ENCODE measurements at regions of chr17 and their contacts with region 1.

Region 1: GRCh38 chr17:48997083-48997826 is at the start of gene IGF2BP1:
- DNase-seq: peak; percentile 88 to 95
- ATAC-seq: peak; percentile 49 to 58
- H3K4me3 ChIP-seq: peak within 1 kb of the TSS; percentile 60
- H3K27ac ChIP-seq: peak within 1 kb of the TSS; percentile 93 to 97
- H3K4me1 ChIP-seq: peaks cover 40% of the 10 kb centered on the region
- CTCF ChIP-seq: no peak
- EP300 ChIP-seq: no peak
- POLR2A ChIP-seq: peak; percentile 4; the same call in 1 of the 2 replicates
- RAD21 ChIP-seq: peak in 1 of 2 experiments; percentile 14; a peak in 1 of 5 replicates
- polyA plus RNA-seq, gene IGF2BP1: 26.2 and 30.1 TPM in 2 replicates

Region 2: GRCh38 chr17:48841395-48841831 is 155.8 kb before region 1 on chr17:
- CTCF ChIA-PET with region 1: no interaction called
- POLR2A ChIA-PET with region 1: no interaction called
- DNase-seq: no peak
- ATAC-seq: no peak; a peak in 1 of 6 replicates
- H3K4me3 ChIP-seq: peak overlapping the region; percentile 8; the same call in 1 of the 3 replicates
- H3K27ac ChIP-seq: peak overlapping the region; percentile 33 to 55; a peak in 3 of 6 replicates
- H3K4me1 ChIP-seq: peaks cover 24% of the 10 kb centered on the region; the same call in 2 of the 3 replicates
- CTCF ChIP-seq: no peak
- EP300 ChIP-seq: no peak
- POLR2A ChIP-seq: no peak
- RAD21 ChIP-seq: no peak

Region 3: GRCh38 chr17:48892940-48893645 is 104.2 kb before region 1 on chr17:
- CTCF ChIA-PET with region 1: interaction called, 4 read pairs
- POLR2A ChIA-PET with region 1: interaction called, 23 read pairs
- DNase-seq: no peak
- ATAC-seq: no peak
- H3K4me3 ChIP-seq: peak overlapping the region; percentile 86
- H3K27ac ChIP-seq: peak overlapping the region; percentile 89 to 92
- H3K4me1 ChIP-seq: peaks cover 26% of the 10 kb centered on the region
- CTCF ChIP-seq: no peak
- EP300 ChIP-seq: no peak
- POLR2A ChIP-seq: no peak
- RAD21 ChIP-seq: no peak

Region 4: DNA sequence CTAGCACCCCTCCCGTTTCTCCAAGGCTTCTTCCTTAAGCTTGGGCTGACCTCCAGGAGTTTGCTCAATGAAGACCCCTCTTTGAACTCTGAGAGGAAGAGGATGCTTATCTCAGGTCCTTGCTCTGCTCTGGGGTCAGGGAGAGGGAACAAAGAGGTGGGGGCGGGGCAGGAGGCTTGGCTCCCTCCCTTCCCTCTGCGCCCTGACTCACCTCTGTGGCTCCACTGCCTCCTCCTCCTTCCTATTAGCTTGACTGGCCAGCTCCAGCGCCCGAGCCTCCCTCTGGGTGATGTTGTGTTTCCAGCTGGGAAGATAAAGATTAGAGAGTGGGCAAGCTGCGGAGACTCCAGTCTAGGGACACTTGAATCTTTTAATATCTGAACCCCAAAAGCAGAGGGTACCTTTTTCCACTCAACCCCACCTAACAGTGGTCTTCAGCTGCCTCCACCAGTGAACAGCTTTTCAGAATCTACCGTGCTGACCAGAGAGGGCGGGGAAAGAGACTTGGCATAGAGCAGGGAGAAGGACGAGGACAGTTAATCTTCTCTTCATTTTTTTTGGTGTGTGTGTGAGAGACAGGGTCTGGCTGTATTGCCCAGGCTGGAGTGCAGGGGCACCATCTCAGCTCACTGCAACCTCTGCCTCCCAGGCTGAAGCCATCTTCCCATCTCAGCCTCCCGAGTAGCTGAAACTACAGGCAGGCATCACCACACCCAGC is 35.6 kb before region 1 on chr17:
- CTCF ChIA-PET with region 1: interaction called, 54 read pairs
- POLR2A ChIA-PET with region 1: interaction called, 156 read pairs
- DNase-seq: peak; percentile 83 to 86
- ATAC-seq: peak; percentile 91 to 94
- H3K4me3 ChIP-seq: peak overlapping the region; percentile 30
- H3K27ac ChIP-seq: peak overlapping the region; percentile 94 to 97
- H3K4me1 ChIP-seq: peaks cover 53% of the 10 kb centered on the region
- CTCF ChIP-seq: no peak
- EP300 ChIP-seq: no peak
- POLR2A ChIP-seq: no peak; the same call in none of the 2 replicates
- RAD21 ChIP-seq: peak in 1 of 2 experiments; percentile 15; a peak in 2 of 5 replicates

Region 5: DNA sequence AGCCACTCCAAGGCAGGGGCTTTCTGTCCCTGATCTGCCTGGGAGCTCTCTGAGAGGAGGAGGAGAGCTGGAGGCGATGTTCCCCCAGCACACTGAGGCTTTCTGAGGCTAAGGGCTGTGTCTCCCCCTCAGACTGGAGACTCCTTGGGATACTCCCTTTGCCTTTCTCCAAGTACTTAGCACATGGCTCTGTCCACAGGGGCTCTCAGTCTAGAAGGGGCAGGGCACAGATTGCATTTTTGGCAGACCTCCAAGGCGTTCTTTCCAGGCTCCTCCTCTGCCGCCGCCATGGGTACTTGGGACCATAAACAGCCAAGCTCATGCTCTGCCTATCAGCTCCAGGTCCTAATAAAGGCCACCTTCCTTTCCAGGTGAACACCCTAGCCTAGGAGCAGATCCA is 27.0 kb before region 1 on chr17:
- CTCF ChIA-PET with region 1: interaction called, 48 read pairs
- POLR2A ChIA-PET with region 1: interaction called, 145 read pairs
- DNase-seq: peak in 1 of 2 experiments; percentile 61
- ATAC-seq: peak; percentile 2; a peak in 2 of 6 replicates
- H3K4me3 ChIP-seq: no peak overlapping the region
- H3K27ac ChIP-seq: peak overlapping the region; percentile 95 to 98
- H3K4me1 ChIP-seq: peaks cover 51% of the 10 kb centered on the region
- CTCF ChIP-seq: no peak
- EP300 ChIP-seq: no peak
- POLR2A ChIP-seq: no peak
- RAD21 ChIP-seq: no peak

Region 6: GRCh38 chr17:48985436-48986245 is 11.6 kb before region 1 on chr17:
- CTCF ChIA-PET with region 1: interaction called, 12 read pairs
- POLR2A ChIA-PET with region 1: interaction called, 7 read pairs
- DNase-seq: no peak
- ATAC-seq: peak; percentile 30 to 35; a peak in 3 of 6 replicates
- H3K4me3 ChIP-seq: no peak overlapping the region
- H3K27ac ChIP-seq: peak overlapping the region in 1 of 2 experiments; percentile 43; a peak in 2 of 6 replicates
- H3K4me1 ChIP-seq: peaks cover 24% of the 10 kb centered on the region
- CTCF ChIP-seq: no peak
- EP300 ChIP-seq: no peak
- POLR2A ChIP-seq: no peak
- RAD21 ChIP-seq: no peak

Region 7: GRCh38 chr17:49016788-49017463 is 19.7 kb after region 1 on chr17:
- CTCF ChIA-PET with region 1: interaction called, 54 read pairs
- POLR2A ChIA-PET with region 1: interaction called, 34 read pairs
- DNase-seq: peak; percentile 91 to 95
- ATAC-seq: peak; percentile 64 to 74
- H3K4me3 ChIP-seq: no peak overlapping the region
- H3K27ac ChIP-seq: peak overlapping the region; percentile 60 to 77; a peak in 5 of 6 replicates
- H3K4me1 ChIP-seq: peaks cover 100% of the 10 kb centered on the region
- CTCF ChIP-seq: no peak
- EP300 ChIP-seq: no peak
- POLR2A ChIP-seq: no peak
- RAD21 ChIP-seq: peak; percentile 16 to 42; a peak in 3 of 5 replicates